Activated B cell treated with CpG ODN at 0.5 μM for 24 hours (primary cell): ENCODE measurements at regions of chr22 and their contacts with region 1.

Region 1: DNA sequence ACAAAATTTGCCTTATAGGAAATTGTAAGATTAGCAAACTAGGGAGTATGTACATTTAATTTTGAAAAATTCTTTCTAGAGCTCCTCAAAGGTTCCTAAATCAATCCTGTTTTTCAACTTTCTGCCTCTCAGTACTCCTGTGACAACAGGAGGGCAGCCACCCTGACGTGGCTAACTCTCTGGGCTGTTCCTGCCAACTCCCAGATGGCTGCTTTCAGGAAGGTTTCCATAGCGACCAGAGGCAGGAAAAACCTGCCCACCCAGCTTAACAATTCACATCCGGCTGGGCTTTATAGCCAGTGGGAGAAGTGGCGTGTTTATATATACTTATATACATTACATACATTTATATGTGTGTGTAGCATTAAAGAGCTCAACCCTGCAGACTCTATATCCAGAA is 26.5 kb downstream of the SGSM3 start:
- DNase-seq: no peak
- ATAC-seq: no peak
- H3K4me3 Mint-ChIP-seq: peak overlapping the region; percentile 28
- H3K27ac Mint-ChIP-seq: peak overlapping the region; percentile 80
- H3K4me1 Mint-ChIP-seq: peaks cover 86% of the 10 kb centered on the region
- H3K27me3 Mint-ChIP-seq: no peaks in the 10 kb centered on the region
- CTCF ChIP-seq: no peak

Region 2: GRCh38 chr22:40137132-40137531 is 259.8 kb before region 1 on chr22:
- CTCF ChIA-PET with region 1: no interaction called
- POLR2A ChIA-PET with region 1: no interaction called
- intact Hi-C with region 1: no loop called
- DNase-seq: no peak
- ATAC-seq: no peak
- H3K4me3 Mint-ChIP-seq: no peak overlapping the region
- H3K27ac Mint-ChIP-seq: no peak overlapping the region
- H3K4me1 Mint-ChIP-seq: no peaks in the 10 kb centered on the region
- H3K27me3 Mint-ChIP-seq: no peaks in the 10 kb centered on the region
- CTCF ChIP-seq: no peak

Region 3: DNA sequence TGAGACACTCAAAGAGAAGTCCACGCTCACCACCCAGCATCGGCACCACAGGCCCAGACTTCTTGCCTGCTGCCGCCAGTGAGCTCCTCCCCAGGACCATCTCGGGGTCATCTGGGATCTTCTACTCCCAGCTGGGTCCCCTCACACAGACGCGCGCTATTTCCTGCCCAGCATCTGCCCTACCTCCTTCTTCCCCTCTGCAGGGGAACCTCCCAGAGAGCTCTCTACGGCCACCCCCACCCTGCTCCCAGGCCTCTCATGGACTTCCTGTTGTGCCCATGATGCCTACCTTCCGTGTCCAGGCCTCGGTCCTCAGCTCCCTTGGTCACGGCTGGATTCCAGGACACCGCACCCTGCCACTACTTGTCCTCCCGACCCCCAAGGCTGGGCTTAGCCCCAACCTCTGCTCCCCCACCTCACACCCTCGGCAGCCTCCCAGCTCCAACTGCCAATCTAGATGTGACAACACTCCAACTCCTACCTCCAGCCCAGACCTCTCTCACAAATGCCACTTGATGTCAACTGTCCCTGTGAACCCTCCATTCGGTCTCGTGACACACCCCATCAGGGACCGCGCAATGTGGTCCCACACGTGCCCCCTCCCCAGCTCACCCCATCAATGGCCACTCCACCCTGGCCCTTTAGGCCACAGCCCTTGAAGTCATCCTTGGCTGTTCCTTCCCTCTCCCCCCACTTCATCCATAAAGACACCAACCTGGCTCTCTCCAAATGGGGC is 18.8 kb after region 1 on chr22:
- CTCF ChIA-PET with region 1: interaction called, 7 read pairs
- POLR2A ChIA-PET with region 1: interaction called, 29 read pairs
- intact Hi-C with region 1: loop called (anchors 1 kb)
- DNase-seq: no peak
- ATAC-seq: peak; percentile 48
- H3K4me3 Mint-ChIP-seq: peak overlapping the region; percentile 75
- H3K27ac Mint-ChIP-seq: peak overlapping the region; percentile 91
- H3K4me1 Mint-ChIP-seq: peaks cover 80% of the 10 kb centered on the region
- H3K27me3 Mint-ChIP-seq: no peaks in the 10 kb centered on the region
- CTCF ChIP-seq: no peak